ENCODE measurements at regions of chr5 and their contacts with region 1.

Region 1: DNA sequence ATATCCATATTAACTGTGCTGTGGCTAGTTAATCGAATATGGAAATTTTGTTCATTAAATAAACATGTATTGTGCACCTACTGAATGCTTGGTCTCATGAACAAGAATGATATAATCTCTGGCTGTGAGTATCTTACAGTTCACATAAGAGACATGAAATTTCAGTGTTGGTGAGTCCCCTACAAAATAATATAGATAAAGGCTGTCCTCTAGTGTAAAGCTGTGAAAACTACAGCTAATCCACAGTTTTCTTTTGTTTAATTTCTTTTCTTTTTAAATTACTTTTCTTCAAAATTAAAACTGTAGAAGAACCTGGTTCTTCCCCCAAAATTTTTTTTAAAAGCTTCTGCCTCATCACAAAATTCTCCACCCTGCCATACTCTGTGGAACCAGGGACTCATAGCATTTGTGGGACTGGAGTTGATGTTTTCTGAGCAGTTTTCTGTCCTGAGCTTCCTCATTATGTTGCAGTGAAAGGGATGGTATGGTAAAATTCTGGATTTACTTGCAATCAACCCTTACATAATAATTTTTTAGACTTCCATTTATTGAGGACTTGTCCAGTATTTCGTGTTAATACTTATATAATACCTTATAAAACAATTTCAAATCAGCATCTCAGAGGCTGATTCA is 135.0 kb downstream of the STK32A start:
- DNase-seq: peak; percentile 20
- ATAC-seq: peak; percentile 79
- H3K4me3 ChIP-seq: no peak overlapping the region
- H3K27ac ChIP-seq: no peak overlapping the region
- H3K4me1 ChIP-seq: peaks cover 2% of the 10 kb centered on the region; the same call in 1 of the 2 replicates
- H3K27me3 ChIP-seq: peaks cover 4% of the 10 kb centered on the region; the same call in 1 of the 2 replicates
- CTCF ChIP-seq: peak; percentile 68
- POLR2A ChIP-seq: no peak
- RAD21 ChIP-seq: peak; percentile 66

Region 2: DNA sequence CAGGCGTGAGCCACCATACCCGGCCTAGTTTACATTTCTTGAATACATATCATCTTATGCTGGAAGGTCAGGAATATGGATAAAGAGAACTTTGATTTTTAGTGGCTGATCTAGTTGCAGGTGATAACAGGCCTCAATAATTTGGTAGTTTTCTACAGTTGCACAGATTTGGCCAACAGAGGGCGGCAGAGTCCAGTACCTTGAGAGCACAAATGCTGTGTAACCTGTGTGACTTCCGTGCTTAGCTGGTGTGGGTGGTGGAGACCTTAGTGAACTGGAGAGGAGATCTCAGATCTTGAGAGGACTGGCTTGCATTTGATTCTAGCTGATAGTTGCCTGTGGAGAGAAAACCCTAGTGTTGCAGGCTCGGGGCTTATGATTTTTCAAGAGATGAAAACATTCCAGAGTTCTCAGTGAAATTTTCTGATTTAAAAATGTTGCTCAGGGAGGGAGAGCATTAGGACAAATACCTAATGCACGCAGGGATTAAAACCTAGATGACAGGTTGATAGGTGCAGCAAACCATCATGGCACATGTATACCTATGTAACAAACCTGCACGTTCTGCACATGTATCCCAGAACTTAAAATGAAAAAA is 836.5 kb before region 1 on chr5:
- CTCF ChIA-PET with region 1: no interaction called
- POLR2A ChIA-PET with region 1: no interaction called
- dilution Hi-C with region 1: no loop called
- in situ Hi-C with region 1: loop called (anchors 25 kb)
- intact Hi-C with region 1: loop called (anchors 10 kb)
- DNase-seq: peak; percentile 50
- ATAC-seq: peak; percentile 97
- H3K4me3 ChIP-seq: no peak overlapping the region
- H3K27ac ChIP-seq: no peak overlapping the region
- H3K4me1 ChIP-seq: no peaks in the 10 kb centered on the region
- H3K27me3 ChIP-seq: peaks cover 5% of the 10 kb centered on the region
- CTCF ChIP-seq: peak; percentile 80
- POLR2A ChIP-seq: no peak
- RAD21 ChIP-seq: peak; percentile 73

Region 3: DNA sequence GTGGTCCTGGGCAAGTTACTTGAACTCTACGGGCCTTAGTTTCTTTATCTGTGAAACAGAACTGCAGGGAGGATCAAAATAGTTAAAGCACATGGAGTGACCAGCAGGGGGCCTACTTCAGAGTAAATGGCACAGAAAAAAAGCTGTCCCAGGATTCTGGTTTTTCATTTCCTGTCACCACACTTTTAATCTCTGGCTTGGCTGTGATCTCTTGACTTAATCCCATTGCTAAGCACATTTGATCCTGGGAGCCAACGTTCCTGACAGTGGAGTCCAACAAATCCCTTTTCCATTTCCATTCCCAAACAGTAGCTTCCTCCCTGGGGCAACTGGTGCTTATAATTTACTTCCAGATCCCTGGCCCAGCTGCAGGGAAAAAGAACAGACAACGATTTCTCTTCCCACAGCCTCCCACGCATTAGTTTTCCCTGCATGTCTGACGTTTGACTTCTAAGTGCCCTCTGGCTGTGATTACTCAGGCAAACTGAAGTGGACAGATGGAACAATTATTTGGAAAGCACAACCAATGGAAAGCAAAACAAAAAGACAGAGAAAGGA is 271.5 kb before region 1 on chr5:
- CTCF ChIA-PET with region 1: interaction called, 6 read pairs
- POLR2A ChIA-PET with region 1: no interaction called
- dilution Hi-C with region 1: no loop called
- in situ Hi-C with region 1: no loop called
- intact Hi-C with region 1: loop called (anchors 5 kb)
- DNase-seq: peak; percentile 34
- ATAC-seq: peak; percentile 57
- H3K4me3 ChIP-seq: no peak overlapping the region
- H3K27ac ChIP-seq: no peak overlapping the region
- H3K4me1 ChIP-seq: no peaks in the 10 kb centered on the region
- H3K27me3 ChIP-seq: no peaks in the 10 kb centered on the region
- CTCF ChIP-seq: peak; percentile 55
- POLR2A ChIP-seq: no peak
- RAD21 ChIP-seq: peak; percentile 44

Region 4: GRCh38 chr5:147216552-147217154 is 153.2 kb before region 1 on chr5:
- CTCF ChIA-PET with region 1: no interaction called
- POLR2A ChIA-PET with region 1: no interaction called
- dilution Hi-C with region 1: no loop called
- in situ Hi-C with region 1: loop called (anchors 10 kb)
- intact Hi-C with region 1: no loop called
- DNase-seq: no peak
- ATAC-seq: peak; percentile 48
- H3K4me3 ChIP-seq: no peak overlapping the region
- H3K27ac ChIP-seq: no peak overlapping the region
- H3K4me1 ChIP-seq: no peaks in the 10 kb centered on the region
- H3K27me3 ChIP-seq: no peaks in the 10 kb centered on the region; the same call in none of the 2 replicates
- CTCF ChIP-seq: no peak
- POLR2A ChIP-seq: no peak
- RAD21 ChIP-seq: no peak

Region 5: DNA sequence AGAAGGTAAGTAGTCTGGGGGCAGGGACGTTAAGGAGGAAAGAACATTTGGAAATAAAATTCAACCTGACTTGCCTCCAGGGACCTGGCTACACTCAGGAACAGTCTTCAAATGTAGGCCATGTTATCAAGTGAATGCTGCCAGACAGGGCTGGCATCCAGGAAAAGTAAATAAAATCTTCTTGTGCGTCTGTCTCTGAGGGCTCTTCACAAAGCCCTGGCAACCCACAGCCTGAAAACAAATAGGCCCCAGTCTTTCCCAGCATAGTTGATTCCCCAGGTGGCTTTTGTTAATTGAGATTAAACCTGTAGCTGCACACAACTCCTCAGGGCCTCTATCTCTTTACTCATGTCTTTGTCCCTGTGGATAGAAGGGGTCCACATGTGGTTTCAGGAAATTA is 79.6 kb before region 1 on chr5:
- CTCF ChIA-PET with region 1: no interaction called
- POLR2A ChIA-PET with region 1: no interaction called
- dilution Hi-C with region 1: no loop called
- in situ Hi-C with region 1: no loop called
- intact Hi-C with region 1: no loop called
- DNase-seq: no peak
- ATAC-seq: no peak
- H3K4me3 ChIP-seq: no peak overlapping the region
- H3K27ac ChIP-seq: no peak overlapping the region
- H3K4me1 ChIP-seq: no peaks in the 10 kb centered on the region
- H3K27me3 ChIP-seq: no peaks in the 10 kb centered on the region; the same call in 1 of the 2 replicates
- CTCF ChIP-seq: no peak
- POLR2A ChIP-seq: no peak
- RAD21 ChIP-seq: no peak

Measured in IMR-90 (cell line).